Dorsolateral prefrontal cortex (tissue), 120 donors: ENCODE measurements at regions of chr6 and their contacts with region 1.

Region 1: GRCh38 chr6:12011276-12012076 is 636 bp upstream of the HIVEP1 start:
- DNase-seq: peak; percentile 67 to 95 (median 92)
- H3K4me3 ChIP-seq: peak overlapping the region; percentile 47 to 87 (median 75)
- H3K27ac ChIP-seq: peak overlapping the region in 55 of 59 donors; percentile 53 to 95 (median 87)
- H3K27me3 ChIP-seq: no peaks in the 10 kb centered on the region
- CTCF ChIP-seq: peak in 6 of 56 donors; percentile 5 to 32 (median 10)

Region 2: GRCh38 chr6:11700118-11700718 is 311.3 kb before region 1 on chr6:
- intact Hi-C with region 1: loop called in 1 of 2 experiments (anchors 10 kb)
- DNase-seq: no peak
- H3K4me3 ChIP-seq: no peak overlapping the region
- H3K27ac ChIP-seq: no peak overlapping the region
- H3K27me3 ChIP-seq: no peaks in the 10 kb centered on the region
- CTCF ChIP-seq: peak; percentile 24 to 74 (median 54)

Region 3: GRCh38 chr6:12097791-12098190 is 86.3 kb after region 1 on chr6:
- intact Hi-C with region 1: no loop called
- DNase-seq: no peak
- H3K4me3 ChIP-seq: no peak overlapping the region
- H3K27ac ChIP-seq: no peak overlapping the region
- H3K27me3 ChIP-seq: no peaks in the 10 kb centered on the region
- CTCF ChIP-seq: no peak

Region 4: DNA sequence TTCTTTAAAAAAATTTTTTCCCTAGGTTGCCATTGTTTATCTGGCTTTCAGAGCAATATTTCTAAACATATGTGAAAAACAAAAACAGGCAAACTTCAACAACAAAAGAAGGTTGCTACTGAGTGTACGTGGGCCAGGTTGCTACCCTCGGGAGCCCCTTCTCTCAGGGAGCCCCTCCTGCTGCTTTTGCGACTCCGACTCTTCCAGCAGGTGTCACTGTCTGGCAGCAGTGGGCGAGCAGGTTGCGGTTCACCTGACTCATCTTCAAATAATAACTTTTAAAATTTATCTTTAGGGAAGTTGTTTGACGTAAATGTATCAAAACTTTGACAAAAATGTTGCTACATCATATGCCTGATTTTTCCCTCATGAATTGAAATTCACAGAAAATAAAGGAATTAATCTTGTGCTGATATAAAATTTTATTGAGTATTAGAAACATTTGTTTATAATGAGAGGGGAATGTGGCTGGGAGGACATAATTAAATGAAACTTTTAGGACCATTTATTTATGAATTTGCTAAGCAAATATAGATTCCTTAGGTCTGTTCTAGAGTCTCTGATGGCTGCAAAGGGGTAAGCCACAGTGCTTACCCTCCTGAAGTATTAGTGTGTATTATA is 139.4 kb after region 1 on chr6:
- intact Hi-C with region 1: loop called in 1 of 2 experiments (anchors 10 kb)
- DNase-seq: peak in 6 of 10 donors; percentile 34 to 62 (median 54)
- H3K4me3 ChIP-seq: peak overlapping the region in 13 of 59 donors; percentile 3 to 40 (median 19)
- H3K27ac ChIP-seq: peak overlapping the region in 56 of 59 donors; percentile 34 to 94 (median 84)
- H3K27me3 ChIP-seq: no peaks in the 10 kb centered on the region
- CTCF ChIP-seq: peak; percentile 14 to 85 (median 66)

Region 5: GRCh38 chr6:12245763-12246718 is 234.6 kb after region 1 on chr6:
- intact Hi-C with region 1: no loop called
- DNase-seq: no peak
- H3K4me3 ChIP-seq: no peak overlapping the region
- H3K27ac ChIP-seq: no peak overlapping the region
- H3K27me3 ChIP-seq: no peaks in the 10 kb centered on the region
- CTCF ChIP-seq: no peak